SK-N-SH (cell line): ENCODE measurements at regions of chr6 and their contacts with region 1.

Region 1: GRCh38 chr6:13614926-13615798 is at the start of gene NOL7:
- DNase-seq: peak; percentile 99
- H3K4me3 ChIP-seq: peak within 1 kb of the TSS; percentile 96 to 99
- H3K27ac ChIP-seq: peak within 1 kb of the TSS; percentile 93 to 95
- H3K4me1 ChIP-seq: peaks cover 5 to 24% of the 10 kb centered on the region in 2 experiments; a peak in 3 of 4 replicates
- H3K27me3 ChIP-seq: no peaks in the 10 kb centered on the region
- CTCF ChIP-seq: peak; percentile 81
- EP300 ChIP-seq: no peak
- RAD21 ChIP-seq: no peak
- polyA plus RNA-seq, gene NOL7: 75.7 and 103 TPM in 2 replicates

Region 2: GRCh38 chr6:13328076-13328874 is 286.9 kb before region 1 on chr6 and contains the start of gene TBC1D7:
- CTCF ChIA-PET with region 1: interaction called, 3 read pairs
- POLR2A ChIA-PET with region 1: interaction called, 10 read pairs
- DNase-seq: peak; percentile 94
- H3K4me3 ChIP-seq: peak within 1 kb of the TSS; percentile 88 to 96
- H3K27ac ChIP-seq: peak within 1 kb of the TSS; percentile 86 to 97
- H3K4me1 ChIP-seq: peaks cover 4 to 12% of the 10 kb centered on the region in 2 experiments; a peak in 3 of 4 replicates
- H3K27me3 ChIP-seq: no peaks in the 10 kb centered on the region
- CTCF ChIP-seq: peak; percentile 24; the same call in 1 of the 2 replicates
- EP300 ChIP-seq: no peak
- RAD21 ChIP-seq: 0 out of 2 replicates have a peak, but pooled peaks have one; percentile 10
- polyA plus RNA-seq, gene TBC1D7: 25.2 and 27.5 TPM in 2 replicates

Region 3: DNA sequence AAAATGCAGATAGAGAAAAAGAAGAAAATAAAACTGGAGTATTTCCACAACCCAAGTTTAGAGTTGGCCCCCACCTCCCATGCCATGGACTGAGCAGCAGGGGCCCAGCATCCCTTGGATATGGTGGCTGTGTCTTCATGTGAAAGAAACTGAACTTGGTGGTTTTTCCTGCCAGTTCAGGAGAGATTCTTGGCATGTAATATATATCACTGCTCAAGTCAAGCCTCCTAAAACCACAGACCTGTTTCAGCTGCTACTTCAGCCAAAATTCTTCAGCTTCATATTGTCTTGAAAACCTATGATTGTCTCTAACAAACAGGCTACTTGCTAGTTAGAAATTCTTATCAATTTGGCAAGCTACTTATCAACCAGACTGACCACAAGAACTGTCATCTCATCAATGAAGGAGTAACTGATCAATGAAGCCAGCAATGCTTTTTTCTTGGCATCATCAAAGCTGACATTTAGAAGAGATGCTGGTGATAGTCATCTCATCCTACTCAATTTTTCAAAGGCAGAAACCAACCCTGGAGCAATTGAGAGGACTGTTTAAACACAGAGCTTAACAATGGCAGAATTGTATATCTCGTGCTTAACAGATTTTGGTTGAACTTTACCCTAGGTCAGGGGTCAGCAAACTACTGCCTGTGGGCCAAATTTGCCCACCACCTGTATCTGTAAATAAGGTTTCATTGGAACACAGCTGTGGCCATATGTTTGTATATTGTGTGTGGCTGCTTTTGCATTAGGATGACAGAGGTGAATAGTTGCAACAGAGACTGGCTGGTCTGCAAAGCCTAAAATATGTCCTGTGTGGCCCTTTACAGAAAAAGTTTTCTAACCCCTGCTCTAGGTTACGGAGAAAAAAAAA is 10.4 kb before region 1 on chr6:
- CTCF ChIA-PET with region 1: interaction called, 10 read pairs
- POLR2A ChIA-PET with region 1: interaction called, 5 read pairs
- DNase-seq: no peak
- H3K4me3 ChIP-seq: no peak overlapping the region
- H3K27ac ChIP-seq: 0 out of 4 replicates have a peak overlapping the region, but pooled peaks of 1 of the 2 experiments have one; percentile 14
- H3K4me1 ChIP-seq: peaks cover 0 to 3% of the 10 kb centered on the region in 2 experiments; a peak in 1 of 4 replicates
- H3K27me3 ChIP-seq: no peaks in the 10 kb centered on the region
- CTCF ChIP-seq: no peak
- EP300 ChIP-seq: no peak
- RAD21 ChIP-seq: no peak

Region 4: DNA sequence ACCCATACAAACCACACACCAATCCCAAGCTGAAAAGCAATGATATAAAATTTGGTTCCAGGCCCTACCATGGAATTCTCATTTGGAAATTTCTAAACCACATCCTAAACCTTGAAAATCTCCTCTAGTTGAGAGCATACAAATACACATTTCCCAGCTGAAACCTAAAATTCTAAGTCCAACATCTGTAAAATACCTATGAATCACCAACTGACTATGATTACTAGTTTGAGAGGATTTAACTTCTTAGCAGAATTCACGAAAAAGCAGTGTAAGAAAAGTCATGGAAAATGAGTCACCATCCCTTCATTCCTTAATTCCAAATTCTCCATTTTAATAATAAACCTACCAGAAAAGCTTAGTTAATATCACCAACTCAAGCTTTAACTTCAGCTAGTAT is 81.1 kb after region 1 on chr6:
- CTCF ChIA-PET with region 1: interaction called, 11 read pairs
- POLR2A ChIA-PET with region 1: no interaction called
- DNase-seq: no peak
- H3K4me3 ChIP-seq: no peak overlapping the region
- H3K27ac ChIP-seq: peak overlapping the region in 1 of 2 experiments; percentile 57; a peak in 2 of 4 replicates
- H3K4me1 ChIP-seq: peaks cover 0 to 33% of the 10 kb centered on the region in 2 experiments; a peak in 2 of 4 replicates
- H3K27me3 ChIP-seq: no peaks in the 10 kb centered on the region
- CTCF ChIP-seq: no peak
- EP300 ChIP-seq: no peak
- RAD21 ChIP-seq: no peak

Region 5: GRCh38 chr6:13711733-13712598 is 96.8 kb after region 1 on chr6 and contains the start of gene RANBP9:
- CTCF ChIA-PET with region 1: interaction called, 8 read pairs
- POLR2A ChIA-PET with region 1: interaction called, 10 read pairs
- DNase-seq: peak; percentile 95
- H3K4me3 ChIP-seq: peak within 1 kb of the TSS; percentile 85 to 92
- H3K27ac ChIP-seq: peak within 1 kb of the TSS; percentile 91 to 94
- H3K4me1 ChIP-seq: peaks cover 4 to 7% of the 10 kb centered on the region in 2 experiments; a peak in 3 of 4 replicates
- H3K27me3 ChIP-seq: no peaks in the 10 kb centered on the region
- CTCF ChIP-seq: no peak
- EP300 ChIP-seq: peak in 1 of 2 experiments; percentile 24; a peak in 1 of 4 replicates
- RAD21 ChIP-seq: no peak
- polyA plus RNA-seq, gene RANBP9: 19.9 and 20.4 TPM in 2 replicates